AG04450 (cell line): ENCODE measurements at regions of chr10 and their contacts with region 1.

Region 1: GRCh38 chr10:21807180-21807579 is 196.3 kb downstream of the DNAJC1 start:
- DNase-seq: no peak
- H3K4me3 ChIP-seq: no peak overlapping the region
- H3K27ac ChIP-seq: no peak overlapping the region
- H3K27me3 ChIP-seq: no peaks in the 10 kb centered on the region
- CTCF ChIP-seq: no peak

Region 2: DNA sequence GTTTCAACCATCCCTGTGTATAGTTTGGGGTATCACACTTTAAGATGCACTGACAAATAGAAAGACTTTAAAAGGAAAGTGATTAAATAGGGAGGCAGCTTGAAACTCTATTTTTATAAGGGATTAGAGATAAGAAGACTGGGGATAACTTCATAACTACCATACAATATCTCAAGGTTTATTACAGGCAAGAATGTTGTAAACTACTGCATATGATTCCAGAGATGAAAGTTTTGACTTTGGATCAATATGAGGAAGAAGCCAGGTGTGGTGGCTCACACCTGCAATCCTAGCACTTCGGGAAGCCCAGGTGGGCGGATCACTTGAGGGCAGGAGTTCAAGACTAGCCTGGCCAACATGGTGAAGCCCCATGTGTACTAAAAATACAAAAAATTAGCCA is 100.3 kb after region 1 on chr10:
- CTCF ChIA-PET with region 1: no interaction called
- POLR2A ChIA-PET with region 1: no interaction called
- DNase-seq: no peak
- H3K4me3 ChIP-seq: no peak overlapping the region
- H3K27ac ChIP-seq: no peak overlapping the region
- H3K27me3 ChIP-seq: no peaks in the 10 kb centered on the region
- CTCF ChIP-seq: no peak

Region 3: DNA sequence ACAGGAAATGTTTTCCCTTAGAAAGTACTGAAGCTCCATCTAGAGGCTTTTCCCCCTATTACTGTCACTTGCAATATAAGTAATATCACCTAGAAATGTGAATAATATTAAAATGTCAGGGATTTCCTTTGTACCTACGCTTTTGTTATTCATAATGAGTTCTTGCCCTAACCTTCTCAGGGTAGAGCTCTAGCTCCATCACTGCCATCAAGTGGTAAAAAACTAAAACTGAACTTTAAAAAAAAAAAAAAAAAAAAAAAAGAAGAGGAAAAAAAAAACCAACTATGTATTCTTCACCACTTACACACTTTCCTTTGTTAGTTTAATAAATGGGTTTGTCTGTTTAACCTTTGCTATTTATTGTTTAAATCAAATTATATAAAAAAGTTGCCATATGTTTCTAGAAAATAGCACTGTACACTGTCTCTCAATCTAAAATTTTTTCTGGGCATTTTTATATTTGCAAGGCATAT is 146.4 kb after region 1 on chr10:
- CTCF ChIA-PET with region 1: interaction called, 10 read pairs
- POLR2A ChIA-PET with region 1: no interaction called
- DNase-seq: no peak
- H3K4me3 ChIP-seq: no peak overlapping the region
- H3K27ac ChIP-seq: no peak overlapping the region
- H3K27me3 ChIP-seq: no peaks in the 10 kb centered on the region
- CTCF ChIP-seq: peak; percentile 52